OCI-LY7 (cell line): ENCODE measurements at regions of chr17 and their contacts with region 1.

Region 1: GRCh38 chr17:57255776-57256681 is at the start of gene MSI2:
- DNase-seq: peak; percentile 89
- H3K4me3 ChIP-seq: peak within 1 kb of the TSS; percentile 81
- H3K27ac ChIP-seq: peak within 1 kb of the TSS; percentile 76
- H3K4me1 ChIP-seq: peaks cover 26% of the 10 kb centered on the region
- CTCF ChIP-seq: no peak
- total RNA-seq, gene MSI2: 131 and 226 TPM in 2 replicates

Region 2: DNA sequence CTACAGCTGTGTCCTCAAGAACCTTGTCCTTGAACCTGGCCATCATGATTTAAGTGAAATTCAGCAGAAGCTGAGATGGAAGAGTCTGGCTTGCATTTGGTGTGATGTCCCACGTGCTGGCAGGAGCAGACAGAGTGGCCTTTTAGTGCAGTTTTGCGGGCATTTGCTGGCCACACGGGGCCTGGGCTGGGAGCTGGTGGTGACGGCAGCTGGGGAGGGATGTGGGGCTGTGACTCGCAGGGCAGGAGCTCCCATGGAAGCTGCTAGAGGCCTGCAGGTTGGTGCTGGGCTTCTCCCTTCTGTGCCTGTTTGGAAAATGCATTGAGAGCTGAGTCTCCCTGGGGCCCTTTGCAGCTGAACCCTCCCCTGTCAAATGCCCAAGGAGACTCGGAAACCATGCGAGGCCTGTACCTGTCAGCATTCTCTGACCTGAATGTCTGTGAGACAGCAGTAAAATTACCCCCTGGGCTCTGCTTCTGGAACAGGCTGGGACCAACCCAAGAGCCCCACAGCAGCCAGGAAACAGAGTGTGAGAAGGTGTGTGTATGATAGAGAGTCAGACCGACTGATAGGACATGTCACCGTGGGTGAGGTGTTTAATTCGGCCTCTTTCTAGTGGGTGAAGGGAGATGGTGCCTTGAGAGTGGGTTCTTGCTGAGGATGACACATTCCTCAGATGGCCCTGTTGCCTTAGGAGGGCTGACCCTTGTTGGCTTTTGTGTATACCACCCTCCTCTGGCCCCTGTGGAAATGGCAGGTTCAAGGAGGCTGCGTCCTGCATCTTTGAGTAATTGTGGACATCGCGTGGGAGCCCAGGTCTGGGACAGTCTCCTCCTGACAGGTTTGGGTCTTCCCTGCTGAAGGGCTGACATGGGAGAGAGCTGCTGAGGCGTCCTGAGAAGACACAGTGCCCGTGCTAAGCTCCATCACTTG is 145.8 kb after region 1 on chr17:
- CTCF ChIA-PET with region 1: no interaction called
- POLR2A ChIA-PET with region 1: interaction called, 5 read pairs
- intact Hi-C with region 1: loop called (anchors 5 kb)
- DNase-seq: peak; percentile 51
- H3K4me3 ChIP-seq: no peak overlapping the region
- H3K27ac ChIP-seq: no peak overlapping the region
- H3K4me1 ChIP-seq: peaks cover 53% of the 10 kb centered on the region
- CTCF ChIP-seq: peak; percentile 71

Region 3: DNA sequence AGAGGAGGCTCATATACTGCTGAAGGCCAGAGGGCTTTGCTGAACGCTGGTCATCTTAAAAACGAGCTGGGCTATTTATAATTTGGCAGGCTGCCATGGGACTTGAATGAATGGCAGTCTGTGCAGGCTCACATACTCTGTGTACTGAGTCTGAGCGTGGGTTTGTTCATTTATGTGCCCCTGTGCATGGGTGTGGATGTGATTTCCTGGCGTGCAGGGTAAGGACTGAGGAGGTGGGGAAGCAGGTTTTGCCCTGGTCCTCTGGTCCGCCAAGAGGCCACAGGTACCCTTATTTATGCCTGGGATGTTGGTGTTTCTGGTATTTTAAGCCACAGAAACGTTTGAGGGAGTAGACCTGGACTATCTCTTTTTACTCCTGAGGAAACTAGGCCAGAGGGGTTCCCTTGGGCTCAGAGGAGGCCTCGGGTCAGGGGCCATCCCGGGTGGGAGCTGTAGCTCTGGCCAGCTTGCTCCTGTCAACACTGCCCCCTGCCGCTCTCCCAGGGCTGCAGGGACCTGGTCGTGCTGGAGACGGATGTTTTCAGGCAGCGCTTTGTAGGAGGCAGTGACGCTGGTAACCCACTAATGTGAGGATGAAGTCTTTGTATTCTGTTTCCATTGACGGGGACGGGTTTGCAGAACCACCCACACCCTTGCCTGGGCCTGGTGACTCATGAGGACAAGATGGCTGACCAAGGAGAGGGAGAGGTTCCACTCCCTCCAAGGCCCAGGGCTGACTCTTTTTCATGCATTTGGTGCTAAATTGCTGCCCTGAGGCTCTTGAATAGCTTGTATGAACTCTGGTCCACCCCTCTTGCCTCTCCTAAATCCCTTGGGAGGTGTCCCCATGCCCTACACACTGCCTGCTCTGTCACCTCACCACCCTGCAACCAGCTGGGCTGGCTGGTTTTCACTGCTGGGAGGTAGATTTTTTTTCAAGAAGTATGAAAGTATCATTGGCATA is 184.8 kb after region 1 on chr17:
- CTCF ChIA-PET with region 1: no interaction called
- POLR2A ChIA-PET with region 1: interaction called, 3 read pairs
- intact Hi-C with region 1: loop called (anchors 1 kb)
- DNase-seq: peak; percentile 66
- H3K4me3 ChIP-seq: no peak overlapping the region
- H3K27ac ChIP-seq: peak overlapping the region; percentile 82
- H3K4me1 ChIP-seq: peaks cover 62% of the 10 kb centered on the region
- CTCF ChIP-seq: peak; percentile 78

Region 4: DNA sequence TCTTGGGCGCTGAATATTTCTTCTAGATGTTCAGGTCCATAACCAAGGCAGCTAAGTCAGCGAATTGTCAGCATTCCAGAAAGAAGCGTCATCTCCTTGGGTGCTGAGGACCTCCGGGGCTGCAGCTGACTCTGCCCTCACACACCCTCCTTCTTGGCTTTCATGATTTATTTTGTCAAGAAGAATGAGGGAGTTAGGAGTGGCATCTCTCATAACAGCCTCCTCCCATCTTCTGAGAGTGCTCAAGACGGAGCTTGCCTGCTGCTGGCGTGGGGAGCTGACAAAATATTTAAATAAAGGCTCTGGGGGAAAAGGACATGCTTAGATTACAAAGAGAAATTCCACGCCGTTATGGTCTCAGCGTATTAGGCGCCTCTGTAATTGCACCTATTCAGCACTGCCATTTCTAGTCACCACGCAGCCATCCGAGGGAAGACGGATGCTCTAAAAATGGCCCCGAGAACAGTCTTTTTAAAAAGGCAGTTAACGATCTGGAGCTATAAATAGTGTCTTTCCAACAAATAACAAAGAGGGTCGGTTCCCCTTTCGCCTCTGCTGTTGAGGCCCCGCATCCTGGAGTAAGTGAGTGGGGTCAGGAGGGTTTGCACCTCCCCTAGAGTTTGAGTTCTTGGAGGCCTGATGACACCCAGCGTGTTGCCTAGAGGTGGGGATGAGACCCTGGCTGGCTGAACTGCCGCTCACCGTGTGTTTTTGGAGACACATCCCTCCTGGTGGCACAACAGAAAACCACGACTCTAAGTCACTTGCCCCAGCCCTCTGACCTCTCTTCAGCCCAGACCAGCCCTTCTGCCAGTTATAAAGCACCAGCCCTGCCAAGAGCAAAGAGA is 302.0 kb after region 1 on chr17:
- CTCF ChIA-PET with region 1: no interaction called
- POLR2A ChIA-PET with region 1: no interaction called
- intact Hi-C with region 1: loop called (anchors 2 kb)
- DNase-seq: peak; percentile 89
- H3K4me3 ChIP-seq: peak overlapping the region; percentile 33
- H3K27ac ChIP-seq: peak overlapping the region; percentile 99
- H3K4me1 ChIP-seq: peaks cover 96% of the 10 kb centered on the region
- CTCF ChIP-seq: no peak